OCI-LY7 (cell line): ENCODE measurements at regions of chr4 and their contacts with region 1.

Region 1: GRCh38 chr4:81179326-81179725 is 35.7 kb downstream of the PRKG2 start:
- DNase-seq: no peak
- H3K4me3 ChIP-seq: no peak overlapping the region
- H3K27ac ChIP-seq: no peak overlapping the region
- H3K4me1 ChIP-seq: no peaks in the 10 kb centered on the region
- CTCF ChIP-seq: no peak

Region 2: GRCh38 chr4:80767944-80768343 is 411.4 kb before region 1 on chr4:
- CTCF ChIA-PET with region 1: no interaction called
- POLR2A ChIA-PET with region 1: no interaction called
- intact Hi-C with region 1: no loop called
- DNase-seq: no peak
- H3K4me3 ChIP-seq: no peak overlapping the region
- H3K27ac ChIP-seq: no peak overlapping the region
- H3K4me1 ChIP-seq: peaks cover 10% of the 10 kb centered on the region
- CTCF ChIP-seq: no peak

Region 3: DNA sequence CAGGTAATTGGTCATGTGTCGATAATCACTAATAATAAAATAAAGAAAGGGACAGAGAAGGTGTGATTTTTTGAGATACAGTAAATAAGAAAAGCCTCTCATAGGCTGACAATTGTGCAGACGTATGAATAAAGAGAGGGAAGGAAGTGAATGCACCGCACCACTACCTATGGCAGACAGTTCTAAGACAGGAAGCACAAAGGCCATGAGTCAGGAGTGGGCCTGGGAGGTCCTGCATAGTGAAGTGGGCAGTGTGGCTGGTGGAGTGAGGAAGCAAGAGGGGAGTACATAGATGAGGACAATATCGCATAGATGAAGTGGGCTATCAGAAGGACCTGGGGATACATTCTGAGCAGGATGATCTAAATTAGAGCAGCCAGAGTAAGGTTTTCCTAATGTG is 73.2 kb before region 1 on chr4:
- CTCF ChIA-PET with region 1: no interaction called
- POLR2A ChIA-PET with region 1: no interaction called
- intact Hi-C with region 1: no loop called
- DNase-seq: no peak
- H3K4me3 ChIP-seq: no peak overlapping the region
- H3K27ac ChIP-seq: no peak overlapping the region
- H3K4me1 ChIP-seq: no peaks in the 10 kb centered on the region
- CTCF ChIP-seq: no peak

Region 4: DNA sequence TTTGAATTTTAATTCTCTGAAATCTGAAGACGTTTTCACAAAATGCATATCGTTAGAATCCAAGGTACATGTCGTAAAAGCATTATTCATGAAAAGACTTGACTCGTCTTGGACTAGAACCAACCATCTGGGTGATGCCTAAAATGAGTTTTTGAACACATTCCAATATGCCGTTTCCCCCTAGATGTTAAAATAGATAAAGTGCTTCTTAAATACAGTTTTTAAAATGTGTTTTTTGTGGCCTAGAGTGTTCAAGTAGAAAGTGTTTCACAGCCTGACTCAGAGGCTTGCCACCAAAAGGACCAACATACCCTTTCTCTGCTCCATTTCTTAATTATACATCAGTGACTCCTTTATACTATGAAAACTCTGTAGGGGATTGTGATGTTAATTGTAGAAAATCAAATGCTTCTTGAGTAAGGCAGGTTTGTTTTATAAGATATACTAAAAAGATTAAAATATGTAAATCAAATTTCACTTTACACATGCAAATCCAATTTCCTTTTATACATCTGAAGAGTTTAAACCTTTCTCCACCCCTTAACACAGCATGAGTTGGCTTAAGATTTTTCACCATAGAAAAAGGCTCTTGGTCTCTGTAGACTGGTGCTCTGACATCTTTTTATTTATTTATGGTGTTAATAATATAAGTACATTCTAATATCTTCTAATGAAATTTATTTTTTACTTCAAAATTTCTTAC is 12.7 kb before region 1 on chr4:
- CTCF ChIA-PET with region 1: no interaction called
- POLR2A ChIA-PET with region 1: interaction called, 14 read pairs
- intact Hi-C with region 1: no loop called
- DNase-seq: no peak
- H3K4me3 ChIP-seq: no peak overlapping the region
- H3K27ac ChIP-seq: no peak overlapping the region
- H3K4me1 ChIP-seq: peaks cover 11% of the 10 kb centered on the region
- CTCF ChIP-seq: no peak